WTC11 (cell line): ENCODE measurements at regions of chr11 and their contacts with region 1.

Region 1: GRCh38 chr11:72793425-72794367 is at the start of gene STARD10:
- DNase-seq: peak; percentile 95
- ATAC-seq: peak; percentile 86
- H3K4me3 Mint-ChIP-seq: peak within 1 kb of the TSS; percentile 98
- H3K27ac Mint-ChIP-seq: peak within 1 kb of the TSS; percentile 98
- H3K4me1 Mint-ChIP-seq: peaks cover 25% of the 10 kb centered on the region
- H3K27me3 Mint-ChIP-seq: no peaks in the 10 kb centered on the region
- CTCF ChIP-seq: peak; percentile 92
- total RNA-seq, gene STARD10: 32.0 to 40.9 TPM (median 36.6 TPM) in 3 replicates

Region 2: GRCh38 chr11:72752088-72752914 is 41.4 kb before region 1 on chr11 and contains the start of gene ARAP1:
- CTCF ChIA-PET with region 1: interaction called, 14 read pairs
- POLR2A ChIA-PET with region 1: no interaction called
- DNase-seq: peak; percentile 76
- ATAC-seq: peak; percentile 76
- H3K4me3 Mint-ChIP-seq: peak within 1 kb of the TSS; percentile 93
- H3K27ac Mint-ChIP-seq: peak within 1 kb of the TSS; percentile 96
- H3K4me1 Mint-ChIP-seq: peaks cover 40% of the 10 kb centered on the region
- H3K27me3 Mint-ChIP-seq: peaks cover 10% of the 10 kb centered on the region
- CTCF ChIP-seq: no peak
- total RNA-seq, gene ARAP1: 76.4 to 98.8 TPM (median 78.3 TPM) in 3 replicates

Region 3: DNA sequence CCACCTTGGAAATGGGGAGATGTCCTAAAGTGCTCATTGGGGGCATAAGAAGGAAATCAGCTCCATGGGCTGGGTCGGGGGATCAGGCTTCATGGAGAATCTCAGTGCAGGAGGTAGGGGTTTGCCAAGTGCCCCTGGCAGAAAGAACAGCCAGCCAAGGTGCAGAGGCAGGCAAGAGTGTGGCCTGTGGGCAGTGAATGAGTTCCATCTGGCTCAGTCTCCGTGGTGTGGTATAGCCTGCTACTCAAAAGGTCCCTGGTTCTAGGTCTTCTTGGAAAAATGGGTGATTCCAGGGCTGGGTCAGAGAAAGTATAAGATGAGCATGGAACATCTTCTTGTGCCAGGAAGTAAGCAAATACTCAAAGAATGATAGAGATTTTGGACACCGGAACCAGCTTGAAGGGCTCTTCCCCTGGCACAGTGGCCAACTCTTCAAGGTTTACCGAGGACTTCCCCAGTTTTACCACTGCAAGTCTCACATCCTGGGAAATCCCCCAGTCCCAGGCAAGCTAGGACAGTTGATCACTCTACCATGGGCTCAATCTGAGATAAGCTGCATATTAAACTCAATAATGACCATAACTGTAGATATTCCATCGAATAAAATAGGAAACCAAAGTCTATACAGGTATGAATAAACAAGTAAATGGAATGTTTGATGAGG is 30.9 kb before region 1 on chr11:
- CTCF ChIA-PET with region 1: interaction called, 31 read pairs
- POLR2A ChIA-PET with region 1: no interaction called
- DNase-seq: no peak
- ATAC-seq: no peak
- H3K4me3 Mint-ChIP-seq: no peak overlapping the region
- H3K27ac Mint-ChIP-seq: no peak overlapping the region
- H3K4me1 Mint-ChIP-seq: peaks cover 24% of the 10 kb centered on the region
- H3K27me3 Mint-ChIP-seq: no peaks in the 10 kb centered on the region; the same call in 1 of the 2 replicates
- CTCF ChIP-seq: no peak

Region 4: GRCh38 chr11:72781313-72782050 is 12.2 kb before region 1 on chr11:
- CTCF ChIA-PET with region 1: interaction called, 42 read pairs
- POLR2A ChIA-PET with region 1: interaction called, 4 read pairs
- DNase-seq: peak; percentile 49
- ATAC-seq: peak; percentile 35
- H3K4me3 Mint-ChIP-seq: peak overlapping the region; percentile 87
- H3K27ac Mint-ChIP-seq: no peak overlapping the region
- H3K4me1 Mint-ChIP-seq: peaks cover 25% of the 10 kb centered on the region
- H3K27me3 Mint-ChIP-seq: peaks cover 7% of the 10 kb centered on the region
- CTCF ChIP-seq: no peak

Region 5: DNA sequence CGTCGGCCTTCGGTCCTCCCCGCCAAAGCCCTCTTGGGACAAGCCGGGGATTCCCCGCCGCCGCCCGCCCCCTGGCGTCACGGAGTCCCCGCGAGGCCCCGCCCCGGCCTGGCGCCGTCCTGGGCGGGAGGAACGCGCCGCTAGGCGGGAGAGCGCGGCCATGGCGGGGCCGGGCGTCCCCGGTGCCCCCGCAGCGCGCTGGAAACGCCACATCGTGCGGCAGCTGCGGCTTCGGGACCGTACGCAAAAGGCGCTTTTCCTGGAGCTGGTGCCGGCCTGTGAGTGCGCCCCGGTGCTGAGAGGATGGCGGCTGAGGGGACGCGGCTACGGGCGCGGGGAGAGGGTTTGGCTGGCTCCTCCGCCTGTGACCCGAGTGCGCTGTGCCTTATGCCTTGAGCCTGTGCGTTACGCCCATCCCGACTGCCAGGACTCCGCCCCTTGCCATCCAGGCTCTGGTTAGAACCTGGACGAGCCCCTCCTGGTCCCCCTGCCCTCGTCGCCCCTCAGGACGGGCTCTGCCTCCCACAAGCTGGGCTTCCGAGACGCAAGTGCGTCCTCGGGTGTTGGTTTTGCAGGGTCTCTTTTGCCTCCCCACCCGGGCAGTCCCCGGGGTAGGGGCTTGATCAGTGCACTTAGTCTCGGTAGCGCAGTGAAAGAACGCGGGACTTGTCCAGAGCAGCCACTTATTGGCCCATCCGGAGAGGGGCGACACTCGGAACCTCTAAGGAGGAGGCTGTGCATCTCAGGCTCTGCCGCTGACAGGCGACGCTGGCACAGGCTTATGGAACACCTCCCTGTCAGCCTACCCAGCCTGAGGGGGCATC is 20.8 kb after region 1 on chr11 and contains the start of gene ATG16L2:
- CTCF ChIA-PET with region 1: interaction called, 54 read pairs
- POLR2A ChIA-PET with region 1: interaction called, 5 read pairs
- DNase-seq: peak; percentile 84
- ATAC-seq: peak; percentile 80
- H3K4me3 Mint-ChIP-seq: peak within 1 kb of the TSS; percentile 95
- H3K27ac Mint-ChIP-seq: peak within 1 kb of the TSS; percentile 97
- H3K4me1 Mint-ChIP-seq: peaks cover 32% of the 10 kb centered on the region
- H3K27me3 Mint-ChIP-seq: peaks cover 22% of the 10 kb centered on the region
- CTCF ChIP-seq: no peak
- total RNA-seq, gene ATG16L2: 22.2 to 29.0 TPM (median 28.6 TPM) in 3 replicates

Region 6: GRCh38 chr11:72821883-72822799 is 28.4 kb after region 1 on chr11:
- CTCF ChIA-PET with region 1: interaction called, 14 read pairs
- POLR2A ChIA-PET with region 1: interaction called, 3 read pairs
- DNase-seq: peak; percentile 96
- ATAC-seq: peak; percentile 84
- H3K4me3 Mint-ChIP-seq: peak overlapping the region; percentile 61
- H3K27ac Mint-ChIP-seq: no peak overlapping the region
- H3K4me1 Mint-ChIP-seq: peaks cover 17% of the 10 kb centered on the region
- H3K27me3 Mint-ChIP-seq: peaks cover 36% of the 10 kb centered on the region
- CTCF ChIP-seq: no peak

Region 7: DNA sequence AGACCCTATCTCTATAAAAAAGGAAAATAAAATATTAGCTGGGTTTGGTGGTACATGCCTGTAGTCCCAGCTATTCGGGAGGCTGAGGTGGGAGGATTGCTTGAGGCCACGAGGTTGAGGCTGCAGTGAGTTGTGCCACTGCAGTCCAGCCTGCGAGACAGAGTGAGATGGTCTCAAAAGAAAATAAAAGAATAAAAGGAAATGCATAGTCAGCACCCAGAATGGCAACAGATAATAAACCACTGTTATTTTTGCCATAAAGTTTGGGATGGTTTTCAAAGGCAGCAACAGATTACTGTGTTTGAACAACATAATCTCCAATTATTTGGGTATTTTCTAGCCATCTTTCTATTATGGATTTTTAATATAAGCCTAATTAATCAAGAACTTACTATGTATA is 82.5 kb after region 1 on chr11:
- CTCF ChIA-PET with region 1: no interaction called
- POLR2A ChIA-PET with region 1: no interaction called
- DNase-seq: no peak
- ATAC-seq: no peak
- H3K4me3 Mint-ChIP-seq: no peak overlapping the region
- H3K27ac Mint-ChIP-seq: no peak overlapping the region
- H3K4me1 Mint-ChIP-seq: peaks cover 3% of the 10 kb centered on the region; the same call in 1 of the 2 replicates
- H3K27me3 Mint-ChIP-seq: no peaks in the 10 kb centered on the region
- CTCF ChIP-seq: no peak